ENCODE measurements at regions of chr7 and their contacts with region 1.

Region 1: DNA sequence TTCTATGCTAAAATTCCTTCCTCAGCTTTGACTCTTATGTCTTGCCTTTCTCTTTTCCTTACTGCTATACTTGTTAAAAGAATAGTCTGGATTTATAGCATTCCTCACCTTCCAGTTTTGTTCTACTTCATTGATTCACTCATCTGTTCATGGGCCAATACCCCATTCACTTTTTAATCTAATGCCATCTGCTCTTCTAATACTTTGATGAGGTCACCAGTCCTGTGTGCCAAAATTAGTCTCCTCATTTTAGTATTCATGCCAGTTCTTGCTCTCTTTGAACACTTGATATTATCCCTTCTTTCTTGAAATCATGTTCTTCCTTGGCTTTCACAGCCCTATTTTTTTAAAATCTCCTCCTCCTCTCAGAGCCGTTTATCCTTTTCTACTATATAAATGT is 19.4 kb downstream of the STK17A start:
- DNase-seq: no peak
- CTCF ChIP-seq: no peak

Region 2: GRCh38 chr7:43531700-43532099 is 70.6 kb before region 1 on chr7:
- CTCF ChIA-PET with region 1: no interaction called
- POLR2A ChIA-PET with region 1: no interaction called
- DNase-seq: no peak
- CTCF ChIP-seq: no peak

Region 3: GRCh38 chr7:43590862-43591550 is 11.3 kb before region 1 on chr7:
- CTCF ChIA-PET with region 1: interaction called, 3 read pairs
- POLR2A ChIA-PET with region 1: interaction called, 13 read pairs
- DNase-seq: peak; percentile 58
- CTCF ChIP-seq: no peak

Measured in GM10248 (cell line).